ENCODE measurements at regions of chr10 and their contacts with region 1.

Region 1: DNA sequence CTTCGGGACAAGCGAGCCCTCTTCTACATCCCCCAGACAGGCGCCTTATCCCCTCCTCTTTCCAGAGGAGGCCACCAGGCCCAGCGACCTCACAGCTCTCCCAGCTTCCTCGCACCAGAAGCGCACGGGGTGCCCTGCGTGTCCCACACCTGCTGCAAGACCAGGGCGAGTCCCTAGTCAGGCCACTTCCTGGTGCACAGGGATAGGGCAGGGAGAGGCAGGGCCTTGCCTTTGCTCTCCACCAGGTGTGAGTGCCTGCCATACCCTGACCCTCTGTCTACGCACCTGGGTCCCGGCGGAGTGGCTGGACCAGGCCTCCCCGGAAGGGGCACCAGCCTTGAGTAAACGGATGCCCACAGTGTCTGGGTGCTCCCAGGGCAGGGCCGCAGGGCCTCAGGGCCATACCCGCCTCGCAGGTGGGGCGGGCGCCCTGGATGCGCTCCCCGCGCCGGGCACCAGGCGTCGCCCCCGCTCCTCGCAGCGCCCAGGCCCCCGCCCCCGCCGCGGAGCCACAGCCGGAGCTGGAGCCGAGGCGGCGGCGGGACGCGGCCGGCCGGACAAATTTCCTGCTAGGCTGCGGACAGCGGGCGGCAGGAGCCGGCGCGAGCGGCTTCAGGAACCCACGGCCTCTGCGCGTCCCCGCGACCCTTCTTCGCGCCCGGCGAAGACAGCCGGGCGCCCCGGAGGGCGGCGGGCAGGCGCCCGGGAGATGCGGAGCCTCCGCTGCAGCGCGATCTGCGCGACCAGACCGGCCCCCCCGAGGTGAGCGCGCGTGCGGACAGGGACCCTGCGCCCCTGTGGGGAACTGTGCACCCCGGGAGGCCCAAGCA is at the start of gene PTPRE:
- DNase-seq: peak; percentile 96
- H3K4me3 ChIP-seq: peak within 1 kb of the TSS; percentile 70 to 77
- H3K27ac ChIP-seq: peak within 1 kb of the TSS; percentile 32 to 34
- H3K4me1 ChIP-seq: peaks cover 0 to 12% of the 10 kb centered on the region in 2 experiments; a peak in 1 of 4 replicates
- H3K27me3 ChIP-seq: no peaks in the 10 kb centered on the region
- CTCF ChIP-seq: peak; percentile 65
- EP300 ChIP-seq: no peak
- RAD21 ChIP-seq: peak; percentile 84
- polyA plus RNA-seq, gene PTPRE: 6.2 and 11.8 TPM in 2 replicates

Region 2: GRCh38 chr10:127919418-127920271 is 12.9 kb after region 1 on chr10:
- CTCF ChIA-PET with region 1: interaction called, 73 read pairs
- POLR2A ChIA-PET with region 1: interaction called, 3 read pairs
- DNase-seq: peak; percentile 64
- H3K4me3 ChIP-seq: no peak overlapping the region
- H3K27ac ChIP-seq: peak overlapping the region; percentile 40 to 58; a peak in 3 of 4 replicates
- H3K4me1 ChIP-seq: peaks cover 22 to 35% of the 10 kb centered on the region in 2 experiments; a peak in 3 of 4 replicates
- H3K27me3 ChIP-seq: no peaks in the 10 kb centered on the region
- CTCF ChIP-seq: peak; percentile 46
- EP300 ChIP-seq: no peak
- RAD21 ChIP-seq: no peak

Region 3: GRCh38 chr10:127977357-127978009 is 70.7 kb after region 1 on chr10:
- CTCF ChIA-PET with region 1: interaction called, 124 read pairs
- POLR2A ChIA-PET with region 1: no interaction called
- DNase-seq: peak; percentile 72
- H3K4me3 ChIP-seq: 0 out of 4 replicates have a peak overlapping the region, but pooled peaks of 1 of the 2 experiments have one; percentile 28
- H3K27ac ChIP-seq: peak overlapping the region; percentile 72 to 82
- H3K4me1 ChIP-seq: peaks cover 22 to 28% of the 10 kb centered on the region in 2 experiments; a peak in 3 of 4 replicates
- H3K27me3 ChIP-seq: no peaks in the 10 kb centered on the region
- CTCF ChIP-seq: no peak
- EP300 ChIP-seq: peak; percentile 45 to 52; a peak in 2 of 4 replicates
- RAD21 ChIP-seq: no peak

Region 4: GRCh38 chr10:128000471-128001362 is 94.0 kb after region 1 on chr10:
- CTCF ChIA-PET with region 1: interaction called, 389 read pairs
- POLR2A ChIA-PET with region 1: interaction called, 5 read pairs
- DNase-seq: no peak
- H3K4me3 ChIP-seq: no peak overlapping the region
- H3K27ac ChIP-seq: peak overlapping the region in 1 of 2 experiments; percentile 38; a peak in 2 of 4 replicates
- H3K4me1 ChIP-seq: peaks cover 9 to 10% of the 10 kb centered on the region in 2 experiments; a peak in 1 of 4 replicates
- H3K27me3 ChIP-seq: no peaks in the 10 kb centered on the region
- CTCF ChIP-seq: no peak
- EP300 ChIP-seq: no peak
- RAD21 ChIP-seq: no peak

Region 5: GRCh38 chr10:128064108-128064969 is 157.6 kb after region 1 on chr10:
- CTCF ChIA-PET with region 1: interaction called, 64 read pairs
- POLR2A ChIA-PET with region 1: no interaction called
- DNase-seq: no peak
- H3K4me3 ChIP-seq: no peak overlapping the region
- H3K27ac ChIP-seq: no peak overlapping the region
- H3K4me1 ChIP-seq: peaks cover 0 to 3% of the 10 kb centered on the region in 2 experiments; a peak in 1 of 4 replicates
- H3K27me3 ChIP-seq: no peaks in the 10 kb centered on the region
- CTCF ChIP-seq: no peak
- EP300 ChIP-seq: no peak
- RAD21 ChIP-seq: no peak

Measured in SK-N-SH (cell line).